ENCODE measurements at regions of chr18 and their contacts with region 1.

Region 1: GRCh38 chr18:70513502-70514171 is 224.8 kb downstream of the SOCS6 start:
- DNase-seq: no peak
- ATAC-seq: no peak

Region 2: GRCh38 chr18:70578480-70578879 is 64.8 kb after region 1 on chr18:
- intact Hi-C with region 1: loop called in 1 of 2 experiments (anchors 10 kb)
- DNase-seq: no peak
- ATAC-seq: no peak

Region 3: DNA sequence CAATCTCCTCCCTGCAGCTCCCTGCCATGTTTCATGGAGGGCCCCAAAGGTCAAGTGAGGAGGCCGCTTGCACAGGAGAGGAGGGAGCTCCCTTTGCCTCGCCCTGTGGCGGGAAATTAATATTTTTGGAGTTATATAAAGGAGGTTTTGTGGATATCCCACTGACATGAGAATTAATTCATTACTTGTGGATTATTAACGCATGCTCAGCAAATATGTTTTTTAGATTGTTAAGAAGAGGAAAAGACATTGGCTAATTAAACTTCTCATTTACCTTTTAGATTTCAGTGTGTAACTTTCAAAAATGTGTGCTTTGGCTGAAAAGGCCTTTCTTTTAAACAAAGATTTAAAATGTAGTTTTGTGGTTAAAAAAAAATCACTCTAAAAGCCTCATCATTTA is 249.2 kb after region 1 on chr18:
- intact Hi-C with region 1: no loop called
- DNase-seq: no peak
- ATAC-seq: no peak